Activated CD4-positive, alpha-beta memory T cell treated with anti-CD3 and anti-CD28 coated beads for 36 hours (primary cell): ENCODE measurements at regions of chr19 and their contacts with region 1.

Region 1: GRCh38 chr19:29761575-29762232 is 46.6 kb upstream of the C19orf12 start:
- DNase-seq: no peak
- H3K4me3 Mint-ChIP-seq: no peak overlapping the region
- H3K27ac Mint-ChIP-seq: no peak overlapping the region
- H3K4me1 Mint-ChIP-seq: peaks cover 2% of the 10 kb centered on the region
- H3K27me3 Mint-ChIP-seq: no peaks in the 10 kb centered on the region

Region 2: GRCh38 chr19:29735800-29736199 is 25.9 kb before region 1 on chr19:
- CTCF ChIA-PET with region 1: interaction called, 39 read pairs
- POLR2A ChIA-PET with region 1: no interaction called
- intact Hi-C with region 1: loop called (anchors 1 kb)
- DNase-seq: no peak
- H3K4me3 Mint-ChIP-seq: no peak overlapping the region
- H3K27ac Mint-ChIP-seq: no peak overlapping the region
- H3K4me1 Mint-ChIP-seq: no peaks in the 10 kb centered on the region
- H3K27me3 Mint-ChIP-seq: peaks cover 7% of the 10 kb centered on the region

Region 3: GRCh38 chr19:29878973-29879654 is 117.4 kb after region 1 on chr19:
- CTCF ChIA-PET with region 1: interaction called, 103 read pairs
- POLR2A ChIA-PET with region 1: no interaction called
- intact Hi-C with region 1: no loop called
- DNase-seq: no peak
- H3K4me3 Mint-ChIP-seq: no peak overlapping the region
- H3K27ac Mint-ChIP-seq: no peak overlapping the region
- H3K4me1 Mint-ChIP-seq: peaks cover 2% of the 10 kb centered on the region
- H3K27me3 Mint-ChIP-seq: peaks cover 7% of the 10 kb centered on the region

Region 4: DNA sequence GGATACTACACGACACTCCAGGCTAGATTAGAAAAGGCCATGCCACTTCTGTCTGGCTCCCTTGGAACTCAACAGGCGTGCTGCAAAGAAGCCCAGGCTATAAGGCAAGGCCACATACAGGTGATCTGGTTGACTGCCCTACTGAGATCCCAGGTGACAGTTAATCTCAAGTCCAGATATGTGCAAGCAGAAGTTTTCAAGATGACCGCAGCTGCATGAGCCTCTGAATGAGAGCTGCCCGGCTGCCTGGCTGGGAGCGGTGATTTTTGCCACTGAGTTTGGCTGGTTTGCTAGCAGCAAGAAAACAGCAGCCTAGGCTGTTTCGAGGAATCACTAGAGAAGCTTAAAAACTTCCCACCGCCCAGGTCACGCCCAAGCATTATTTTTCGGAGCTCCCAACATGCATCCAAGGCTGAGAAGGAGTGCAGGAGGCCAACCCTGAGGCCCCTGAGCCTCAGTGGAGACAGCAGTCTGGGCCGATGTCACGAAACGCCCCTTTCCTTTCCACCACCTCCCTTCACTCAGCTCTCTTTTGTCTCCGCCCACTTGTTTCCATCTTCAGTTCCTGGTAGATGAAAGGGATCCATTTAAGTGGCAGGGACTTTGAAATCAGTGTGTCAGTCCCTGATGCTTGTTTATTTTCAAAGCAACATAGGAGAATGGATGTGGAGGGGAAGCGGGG is 166.4 kb after region 1 on chr19:
- CTCF ChIA-PET with region 1: no interaction called
- POLR2A ChIA-PET with region 1: no interaction called
- intact Hi-C with region 1: no loop called
- DNase-seq: no peak
- H3K4me3 Mint-ChIP-seq: no peak overlapping the region
- H3K27ac Mint-ChIP-seq: no peak overlapping the region
- H3K4me1 Mint-ChIP-seq: peaks cover 2% of the 10 kb centered on the region
- H3K27me3 Mint-ChIP-seq: no peaks in the 10 kb centered on the region

Region 5: DNA sequence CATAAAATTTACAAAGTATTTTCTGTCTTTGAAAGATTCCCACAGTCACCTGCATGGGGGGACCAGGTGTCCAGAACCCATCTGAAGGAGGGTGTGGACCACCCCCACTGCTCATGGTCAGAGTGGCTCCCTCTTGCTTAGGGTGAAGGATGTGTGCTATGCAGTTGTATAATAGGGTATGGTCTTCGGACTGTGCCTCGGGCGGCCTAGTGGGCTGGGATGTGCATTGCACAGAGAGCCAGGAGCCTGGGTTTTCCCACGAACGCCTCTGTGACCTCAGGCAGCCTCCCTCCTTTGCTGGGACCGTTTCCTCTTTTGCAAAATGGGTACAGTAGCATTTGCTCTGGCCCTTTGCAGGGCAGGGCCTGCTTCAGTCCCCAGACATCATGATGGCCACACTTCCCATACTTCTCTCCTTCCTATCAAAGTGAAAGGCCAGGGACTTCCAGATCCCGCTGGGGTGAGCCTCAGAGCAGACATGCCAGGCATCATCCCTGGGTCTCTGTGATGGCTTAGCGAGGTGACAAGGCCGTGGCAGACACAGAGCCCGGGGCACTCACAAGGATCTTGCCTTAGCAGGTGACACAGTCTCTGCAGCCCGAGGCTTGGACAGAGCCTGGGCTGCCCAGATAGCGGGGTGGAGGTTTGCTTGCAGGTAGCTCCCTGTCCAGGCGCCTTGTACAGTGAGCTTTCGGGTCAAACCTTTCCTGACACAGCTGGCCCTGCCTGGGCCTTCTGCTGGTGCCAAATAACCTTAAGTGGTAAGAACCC is 551.1 kb after region 1 on chr19:
- CTCF ChIA-PET with region 1: no interaction called
- POLR2A ChIA-PET with region 1: no interaction called
- intact Hi-C with region 1: no loop called
- DNase-seq: no peak
- H3K4me3 Mint-ChIP-seq: no peak overlapping the region
- H3K27ac Mint-ChIP-seq: no peak overlapping the region
- H3K4me1 Mint-ChIP-seq: no peaks in the 10 kb centered on the region
- H3K27me3 Mint-ChIP-seq: no peaks in the 10 kb centered on the region